ENCODE measurements at regions of chr6 and their contacts with region 1.

Region 1: DNA sequence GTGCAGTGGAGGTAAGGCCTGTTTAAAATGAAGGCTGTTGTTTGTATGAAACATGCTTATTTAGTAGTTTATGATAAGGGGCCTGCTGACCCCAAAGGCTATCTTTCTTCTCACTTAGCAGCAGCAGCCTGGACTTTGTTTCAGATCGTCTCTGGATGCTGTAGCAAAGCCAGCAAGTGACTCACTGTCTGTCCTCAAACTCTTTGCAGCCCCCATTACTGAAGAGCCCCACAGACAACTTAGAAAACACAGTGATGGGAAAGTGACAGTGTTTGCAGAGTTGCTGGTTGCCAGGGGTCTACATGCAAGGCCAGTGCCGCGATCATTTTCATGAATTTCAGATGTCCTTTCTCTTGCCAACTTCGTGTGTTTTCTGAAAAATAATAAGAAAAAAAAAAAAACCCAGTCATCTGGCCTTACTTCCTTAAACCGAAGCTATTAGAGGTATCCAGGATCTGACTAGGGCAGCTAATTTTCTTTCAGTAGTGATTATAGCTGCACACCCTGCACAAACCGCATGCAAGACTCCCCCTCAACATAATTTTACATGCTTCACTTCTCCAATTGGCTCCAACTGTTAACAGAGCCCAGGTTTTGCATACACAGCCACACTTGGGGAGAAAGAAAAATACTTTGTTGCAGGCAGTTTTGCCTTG is 11.6 kb upstream of the F13A1 start:
- DNase-seq: no peak
- ATAC-seq: peak; percentile 72
- H3K4me3 Mint-ChIP-seq: peak overlapping the region; percentile 81
- H3K27ac Mint-ChIP-seq: peak overlapping the region; percentile 100
- H3K4me1 Mint-ChIP-seq: peaks cover 48% of the 10 kb centered on the region
- H3K27me3 Mint-ChIP-seq: no peaks in the 10 kb centered on the region
- CTCF ChIP-seq: no peak

Region 2: DNA sequence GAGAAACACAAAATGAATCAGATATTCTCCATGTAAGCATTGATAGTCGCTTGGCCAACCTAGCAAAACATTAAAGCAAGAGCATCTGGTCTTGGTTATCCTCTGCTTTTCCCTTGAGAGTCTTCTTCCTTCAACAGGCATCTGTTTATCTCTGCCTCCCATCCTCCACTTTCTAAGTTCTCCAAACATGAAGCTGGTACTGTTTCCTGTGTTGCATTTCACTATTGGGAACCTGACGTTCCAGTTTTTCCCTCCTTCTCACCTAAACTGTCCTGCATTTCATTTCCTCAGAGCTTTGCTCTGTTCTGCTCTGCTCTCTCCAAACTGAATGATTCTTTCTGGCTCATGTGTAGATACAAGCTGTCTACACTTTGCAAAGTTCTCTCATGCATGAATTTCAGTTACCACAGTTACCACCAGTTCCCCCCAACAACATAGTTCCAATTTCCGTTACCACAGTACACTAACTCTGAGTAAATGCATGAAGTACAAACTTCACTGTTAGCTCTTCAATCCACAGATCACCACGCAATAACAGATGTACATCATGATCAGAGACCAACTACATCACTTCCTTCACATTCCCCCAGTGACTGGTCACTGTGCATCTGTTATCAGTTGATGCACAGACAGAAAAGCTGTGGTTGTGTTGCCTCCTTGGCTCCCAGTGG is 75.1 kb after region 1 on chr6:
- CTCF ChIA-PET with region 1: interaction called, 4 read pairs
- POLR2A ChIA-PET with region 1: interaction called, 50 read pairs
- intact Hi-C with region 1: loop called (anchors 1 kb)
- DNase-seq: no peak
- ATAC-seq: peak; percentile 79
- H3K4me3 Mint-ChIP-seq: no peak overlapping the region
- H3K27ac Mint-ChIP-seq: no peak overlapping the region
- H3K4me1 Mint-ChIP-seq: peaks cover 13% of the 10 kb centered on the region
- H3K27me3 Mint-ChIP-seq: peaks cover 16% of the 10 kb centered on the region
- CTCF ChIP-seq: no peak